ENCODE measurements at regions of chr17 and their contacts with region 1.

Region 1: DNA sequence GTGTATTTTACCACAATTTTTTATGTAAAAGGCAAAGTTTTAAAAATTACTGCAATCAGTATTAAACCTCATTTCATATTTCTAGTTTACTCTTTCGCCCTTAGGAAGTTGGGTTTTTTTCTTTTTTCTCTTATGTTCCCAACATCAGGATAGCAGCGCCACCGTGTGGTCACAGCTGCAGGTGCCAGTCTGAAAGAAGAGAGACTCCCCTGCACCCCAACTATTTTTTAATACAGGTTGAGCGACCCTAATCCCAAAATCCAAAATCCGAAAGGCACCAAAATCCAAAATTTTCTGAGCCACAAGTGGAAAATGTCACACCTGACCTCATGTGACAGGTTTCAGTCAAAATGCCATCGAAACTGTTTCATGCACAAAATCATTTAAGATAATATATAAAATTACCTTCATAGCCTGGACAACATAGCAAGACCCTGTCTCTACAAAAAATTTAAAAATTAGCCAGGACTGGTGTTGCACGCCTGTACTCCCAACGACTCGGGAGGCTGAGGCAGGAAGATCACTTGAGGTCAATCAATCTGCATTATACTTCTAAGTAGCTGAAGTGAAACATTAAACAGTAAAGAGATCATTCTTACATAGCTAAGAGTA is 21.8 kb upstream of the ASGR2 start:
- DNase-seq: peak; percentile 42 to 70
- H3K4me3 ChIP-seq: peak overlapping the region; percentile 50
- H3K27ac ChIP-seq: no peak overlapping the region
- H3K4me1 ChIP-seq: peaks cover 16% of the 10 kb centered on the region
- H3K27me3 ChIP-seq: no peaks in the 10 kb centered on the region
- CTCF ChIP-seq: peak; percentile 98

Region 2: DNA sequence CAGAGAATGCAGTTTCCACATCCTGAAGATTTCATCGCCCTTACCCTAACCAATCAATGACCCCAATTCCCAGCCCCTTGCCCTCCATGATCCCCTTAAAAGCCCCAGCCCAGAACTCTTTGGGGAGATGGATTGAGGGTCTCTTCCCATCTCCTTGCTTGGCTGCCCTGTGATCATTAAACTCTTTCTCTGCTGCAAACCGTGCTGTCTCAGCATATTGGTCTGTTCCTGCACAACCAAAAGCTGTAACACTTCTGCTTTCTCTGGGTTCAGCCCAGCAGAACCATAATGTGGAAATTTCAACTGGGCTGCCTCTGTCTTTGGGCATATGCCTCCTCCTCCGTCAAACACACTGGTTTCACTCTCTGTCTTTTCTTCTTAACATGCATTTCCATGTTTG is 1485.0 kb before region 1 on chr17:
- CTCF ChIA-PET with region 1: no interaction called
- POLR2A ChIA-PET with region 1: interaction called, 26 read pairs
- intact Hi-C with region 1: no loop called
- DNase-seq: no peak
- H3K4me3 ChIP-seq: no peak overlapping the region
- H3K27ac ChIP-seq: no peak overlapping the region
- H3K4me1 ChIP-seq: no peaks in the 10 kb centered on the region
- H3K27me3 ChIP-seq: peaks cover 48% of the 10 kb centered on the region
- CTCF ChIP-seq: no peak

Region 3: DNA sequence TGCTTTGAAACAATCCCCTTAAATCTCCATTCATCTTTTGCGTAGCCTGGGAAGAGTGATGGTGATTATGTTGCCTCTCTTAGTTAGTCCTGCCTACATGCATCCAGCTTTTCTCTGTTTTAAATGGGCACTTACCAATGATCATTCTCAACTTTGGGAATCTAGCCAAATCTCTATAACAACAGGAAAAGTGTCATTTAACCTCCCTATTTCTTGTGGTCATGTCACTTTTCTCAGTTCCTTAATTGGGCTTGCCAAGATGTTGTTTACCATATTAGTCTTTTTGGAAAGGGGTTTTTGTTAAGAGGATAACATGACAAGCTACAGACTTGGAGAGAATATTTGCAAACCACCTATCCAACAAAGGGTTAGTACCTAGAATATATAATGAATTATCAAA is 40.7 kb before region 1 on chr17:
- CTCF ChIA-PET with region 1: no interaction called
- POLR2A ChIA-PET with region 1: no interaction called
- intact Hi-C with region 1: no loop called
- DNase-seq: no peak
- H3K4me3 ChIP-seq: no peak overlapping the region
- H3K27ac ChIP-seq: no peak overlapping the region
- H3K4me1 ChIP-seq: peaks cover 5% of the 10 kb centered on the region; the same call in 1 of the 2 replicates
- H3K27me3 ChIP-seq: peaks cover 30% of the 10 kb centered on the region
- CTCF ChIP-seq: no peak

Region 4: GRCh38 chr17:7177196-7177953 is 41.0 kb after region 1 on chr17:
- CTCF ChIA-PET with region 1: interaction called, 5 read pairs
- POLR2A ChIA-PET with region 1: no interaction called
- intact Hi-C with region 1: loop called (anchors 5 kb)
- DNase-seq: peak; percentile 39 to 75
- H3K4me3 ChIP-seq: peak overlapping the region; percentile 76
- H3K27ac ChIP-seq: no peak overlapping the region
- H3K4me1 ChIP-seq: peaks cover 4% of the 10 kb centered on the region
- H3K27me3 ChIP-seq: no peaks in the 10 kb centered on the region
- CTCF ChIP-seq: peak; percentile 92